CD8-positive, alpha-beta T cell (primary cell): ENCODE measurements at regions of chr17 and their contacts with region 1.

Region 1: DNA sequence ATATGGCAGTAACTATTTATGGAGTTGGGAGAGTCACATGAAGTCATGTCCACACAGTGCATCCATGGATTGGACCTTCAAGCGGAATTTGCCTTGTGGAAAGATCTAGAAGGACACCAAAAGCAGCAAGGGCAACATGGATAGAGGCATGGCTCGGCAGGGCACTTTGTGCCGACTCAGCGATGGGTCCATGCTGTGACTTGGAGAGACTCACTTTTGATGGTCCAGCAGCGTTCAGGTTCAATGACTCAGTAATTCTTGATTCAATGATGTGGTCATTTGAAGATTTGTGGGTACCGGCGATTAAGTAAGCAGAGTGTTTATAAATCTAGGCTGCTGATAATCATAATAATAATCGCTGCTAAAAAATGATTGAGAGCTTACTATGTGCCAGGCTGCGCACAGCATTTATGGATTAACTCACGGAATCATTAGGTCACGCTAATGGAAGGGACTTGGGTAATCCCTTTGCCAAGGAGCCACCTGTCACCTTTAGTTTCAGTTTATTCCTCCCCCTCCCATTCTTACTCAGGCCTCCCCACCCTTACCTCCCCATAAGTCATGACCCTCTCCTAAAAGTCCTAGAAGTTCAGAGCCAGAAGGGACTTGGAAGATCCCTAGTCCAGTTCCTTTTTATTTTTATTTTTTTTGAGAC is 127.5 kb upstream of the CRHR1 start:
- DNase-seq: no peak
- ATAC-seq: no peak
- H3K4me3 ChIP-seq: no peak overlapping the region
- H3K4me3 Mint-ChIP-seq: no peak overlapping the region
- H3K27ac ChIP-seq: no peak overlapping the region
- H3K27ac Mint-ChIP-seq: no peak overlapping the region
- H3K4me1 ChIP-seq: no peaks in the 10 kb centered on the region
- H3K4me1 Mint-ChIP-seq: no peaks in the 10 kb centered on the region
- H3K27me3 ChIP-seq: no peaks in the 10 kb centered on the region
- H3K27me3 Mint-ChIP-seq: peaks cover 14% of the 10 kb centered on the region
- CTCF ChIP-seq: no peak

Region 2: DNA sequence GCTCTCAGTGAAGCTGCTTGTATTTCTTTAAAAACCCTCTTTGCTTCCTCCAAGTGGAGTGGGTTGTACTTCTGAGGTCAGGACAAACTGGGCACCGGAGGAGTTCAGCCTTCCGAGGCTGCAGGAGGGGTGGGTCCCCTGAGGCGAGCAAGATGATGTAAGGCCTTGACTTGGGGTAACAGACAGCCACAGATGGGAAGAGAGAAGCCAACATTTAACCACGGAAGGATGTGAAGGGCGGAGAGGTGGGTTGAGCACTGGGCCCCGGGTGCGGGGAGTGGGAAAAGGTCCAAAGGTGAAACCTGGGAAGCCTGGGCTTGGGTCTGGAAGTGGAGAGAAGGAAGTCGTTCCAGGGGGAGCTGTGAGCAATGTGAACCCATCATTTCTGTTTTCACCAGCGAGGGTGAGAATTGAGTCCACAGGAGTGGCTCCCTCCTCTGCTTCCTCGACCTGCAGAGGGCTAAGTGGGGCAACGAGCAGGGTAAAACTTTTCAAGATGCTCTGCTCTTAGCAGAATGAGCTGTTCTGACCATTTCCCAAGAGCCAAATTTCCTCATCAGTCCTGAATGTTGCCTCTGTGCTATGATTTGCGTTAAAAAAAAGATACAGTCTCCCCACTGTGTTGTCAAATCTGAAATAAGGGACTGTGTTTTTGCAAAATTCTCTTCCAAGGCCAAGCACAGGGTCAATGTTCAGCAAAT is 10.2 kb before region 1 on chr17:
- CTCF ChIA-PET with region 1: no interaction called
- POLR2A ChIA-PET with region 1: no interaction called
- intact Hi-C with region 1: no loop called
- DNase-seq: no peak
- ATAC-seq: no peak
- H3K4me3 ChIP-seq: no peak overlapping the region
- H3K4me3 Mint-ChIP-seq: no peak overlapping the region
- H3K27ac ChIP-seq: no peak overlapping the region
- H3K27ac Mint-ChIP-seq: no peak overlapping the region
- H3K4me1 ChIP-seq: peaks cover 11% of the 10 kb centered on the region
- H3K4me1 Mint-ChIP-seq: peaks cover 12% of the 10 kb centered on the region
- H3K27me3 ChIP-seq: no peaks in the 10 kb centered on the region
- H3K27me3 Mint-ChIP-seq: no peaks in the 10 kb centered on the region
- CTCF ChIP-seq: no peak

Region 3: DNA sequence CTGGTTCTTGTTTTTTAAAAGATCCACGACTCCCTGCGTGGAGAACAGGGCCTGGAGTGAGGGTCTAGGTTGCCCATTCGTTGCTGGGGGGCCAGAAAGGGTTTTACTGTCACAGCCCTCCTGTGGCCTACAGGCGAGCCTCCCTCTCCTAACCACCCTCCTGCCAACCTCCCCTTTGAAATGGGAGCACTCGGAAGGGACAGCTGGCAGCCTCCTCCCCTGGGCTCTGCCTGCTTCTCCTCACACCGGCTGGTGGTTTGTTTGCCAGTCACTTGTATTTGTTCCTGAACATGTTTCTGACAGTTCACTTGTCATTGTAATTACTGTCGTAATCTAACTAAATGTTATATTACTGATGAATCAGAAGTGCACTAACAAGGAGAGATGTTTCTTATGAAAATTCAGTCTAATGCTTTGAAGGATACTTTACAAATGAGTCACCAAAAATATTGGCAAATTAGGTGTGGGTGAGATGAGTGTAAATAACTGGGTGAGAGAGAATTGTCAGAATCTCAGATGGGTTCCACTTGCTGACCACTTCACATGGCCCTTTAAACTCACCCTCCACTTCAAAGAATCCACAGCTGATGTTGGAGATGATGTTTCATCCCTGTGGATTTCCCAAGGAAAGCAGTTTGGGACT is 185.3 kb after region 1 on chr17:
- CTCF ChIA-PET with region 1: no interaction called
- POLR2A ChIA-PET with region 1: no interaction called
- intact Hi-C with region 1: loop called in 1 of 2 experiments (anchors 5 kb)
- DNase-seq: no peak
- ATAC-seq: no peak
- H3K4me3 ChIP-seq: no peak overlapping the region
- H3K4me3 Mint-ChIP-seq: no peak overlapping the region
- H3K27ac ChIP-seq: no peak overlapping the region
- H3K27ac Mint-ChIP-seq: no peak overlapping the region
- H3K4me1 ChIP-seq: no peaks in the 10 kb centered on the region
- H3K4me1 Mint-ChIP-seq: no peaks in the 10 kb centered on the region
- H3K27me3 ChIP-seq: no peaks in the 10 kb centered on the region
- H3K27me3 Mint-ChIP-seq: peaks cover 2% of the 10 kb centered on the region
- CTCF ChIP-seq: no peak